ENCODE measurements at regions of chr5 and their contacts with region 1.

Region 1: DNA sequence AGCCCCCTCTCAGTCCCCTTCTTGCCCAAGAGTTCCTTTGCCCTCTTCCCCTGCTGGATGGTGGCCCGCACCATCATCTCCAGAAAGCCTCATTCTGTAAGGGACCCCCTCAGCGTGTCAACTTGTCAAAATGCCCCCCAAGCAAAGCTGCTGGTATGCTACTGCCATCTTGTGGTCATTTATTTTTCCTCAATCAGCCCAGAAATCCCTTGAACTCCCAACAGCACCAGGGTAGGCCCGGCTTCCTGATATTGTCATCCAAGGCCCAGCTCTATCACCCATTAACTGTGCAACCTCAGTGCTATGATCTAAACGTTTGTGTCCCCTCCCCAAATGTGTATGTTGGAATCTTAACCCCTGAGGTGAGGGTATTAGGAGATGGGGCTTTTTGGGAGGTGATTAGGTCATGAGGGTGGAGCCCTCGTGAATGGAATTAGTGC is 53.2 kb upstream of the FBXW11 start:
- DNase-seq: peak; percentile 46
- ATAC-seq: no peak
- H3K4me3 ChIP-seq: no peak overlapping the region
- H3K4me3 Mint-ChIP-seq: no peak overlapping the region
- H3K27ac ChIP-seq: no peak overlapping the region
- H3K27ac Mint-ChIP-seq: no peak overlapping the region
- H3K4me1 ChIP-seq: no peaks in the 10 kb centered on the region
- H3K4me1 Mint-ChIP-seq: no peaks in the 10 kb centered on the region
- H3K27me3 ChIP-seq: no peaks in the 10 kb centered on the region
- H3K27me3 Mint-ChIP-seq: no peaks in the 10 kb centered on the region
- CTCF ChIP-seq: peak; percentile 67

Region 2: DNA sequence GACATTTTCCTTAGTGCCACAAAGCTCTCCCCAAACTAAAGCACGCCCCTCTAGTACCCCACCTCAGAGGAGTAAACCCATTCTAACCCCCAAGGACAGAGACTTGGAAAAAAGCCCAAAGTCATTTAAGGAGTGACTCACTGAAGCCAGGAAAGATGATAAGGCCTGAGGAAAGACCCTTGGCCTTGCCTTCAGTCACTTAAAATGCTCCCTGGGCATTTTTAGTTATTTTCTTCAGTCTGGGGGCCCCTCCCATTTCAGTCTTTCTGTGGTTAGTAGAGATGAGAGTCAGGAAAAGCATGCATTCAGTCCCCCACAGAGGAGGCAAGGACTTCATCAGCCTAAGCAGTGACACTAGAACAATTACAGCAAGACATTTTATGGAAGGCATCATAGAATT is 764.4 kb before region 1 on chr5:
- CTCF ChIA-PET with region 1: no interaction called
- POLR2A ChIA-PET with region 1: no interaction called
- intact Hi-C with region 1: no loop called
- DNase-seq: no peak
- ATAC-seq: no peak
- H3K4me3 ChIP-seq: no peak overlapping the region
- H3K4me3 Mint-ChIP-seq: no peak overlapping the region
- H3K27ac ChIP-seq: no peak overlapping the region
- H3K27ac Mint-ChIP-seq: no peak overlapping the region
- H3K4me1 ChIP-seq: no peaks in the 10 kb centered on the region
- H3K4me1 Mint-ChIP-seq: no peaks in the 10 kb centered on the region
- H3K27me3 ChIP-seq: peaks cover 0 to 4% (median 0%) of the 10 kb centered on the region in 4 experiments
- H3K27me3 Mint-ChIP-seq: peaks cover 21% of the 10 kb centered on the region
- CTCF ChIP-seq: no peak

Region 3: GRCh38 chr5:171387345-171387969 is 672.2 kb before region 1 on chr5 and contains the start of gene NPM1:
- CTCF ChIA-PET with region 1: no interaction called
- POLR2A ChIA-PET with region 1: no interaction called
- intact Hi-C with region 1: no loop called
- DNase-seq: peak; percentile 99
- ATAC-seq: peak; percentile 87
- H3K4me3 ChIP-seq: peak within 1 kb of the TSS; percentile 67 to 82 (median 75)
- H3K4me3 Mint-ChIP-seq: peak within 1 kb of the TSS; percentile 100
- H3K27ac ChIP-seq: peak within 1 kb of the TSS; percentile 74 to 87
- H3K27ac Mint-ChIP-seq: peak within 1 kb of the TSS; percentile 99
- H3K4me1 ChIP-seq: peaks cover 39 to 41% of the 10 kb centered on the region in 2 donors
- H3K4me1 Mint-ChIP-seq: peaks cover 51% of the 10 kb centered on the region
- H3K27me3 ChIP-seq: no peaks in the 10 kb centered on the region
- H3K27me3 Mint-ChIP-seq: peaks cover under 1% of the 10 kb centered on the region
- CTCF ChIP-seq: no peak
- total RNA-seq, gene NPM1: 819 and 920 TPM in 2 replicates

Region 4: GRCh38 chr5:172071289-172071875 is 11.7 kb after region 1 on chr5:
- CTCF ChIA-PET with region 1: interaction called, 16 read pairs
- POLR2A ChIA-PET with region 1: no interaction called
- intact Hi-C with region 1: no loop called
- DNase-seq: no peak
- ATAC-seq: no peak
- H3K4me3 ChIP-seq: no peak overlapping the region
- H3K4me3 Mint-ChIP-seq: no peak overlapping the region
- H3K27ac ChIP-seq: peak overlapping the region in 1 of 2 donors; percentile 43
- H3K27ac Mint-ChIP-seq: no peak overlapping the region
- H3K4me1 ChIP-seq: peaks cover 3 to 8% of the 10 kb centered on the region in 2 donors
- H3K4me1 Mint-ChIP-seq: peaks cover 23% of the 10 kb centered on the region
- H3K27me3 ChIP-seq: no peaks in the 10 kb centered on the region
- H3K27me3 Mint-ChIP-seq: no peaks in the 10 kb centered on the region
- CTCF ChIP-seq: no peak

Region 5: GRCh38 chr5:172106511-172107356 is 47.1 kb after region 1 on chr5:
- CTCF ChIA-PET with region 1: no interaction called
- POLR2A ChIA-PET with region 1: no interaction called
- intact Hi-C with region 1: no loop called
- DNase-seq: peak; percentile 76
- ATAC-seq: no peak
- H3K4me3 ChIP-seq: no peak overlapping the region
- H3K4me3 Mint-ChIP-seq: no peak overlapping the region
- H3K27ac ChIP-seq: peak overlapping the region in 1 of 2 donors; percentile 41
- H3K27ac Mint-ChIP-seq: peak overlapping the region; percentile 70
- H3K4me1 ChIP-seq: peaks cover 31 to 40% of the 10 kb centered on the region in 2 donors
- H3K4me1 Mint-ChIP-seq: peaks cover 35% of the 10 kb centered on the region
- H3K27me3 ChIP-seq: no peaks in the 10 kb centered on the region
- H3K27me3 Mint-ChIP-seq: no peaks in the 10 kb centered on the region
- CTCF ChIP-seq: peak; percentile 92

Region 6: GRCh38 chr5:172213126-172213525 is 153.4 kb after region 1 on chr5:
- CTCF ChIA-PET with region 1: no interaction called
- POLR2A ChIA-PET with region 1: no interaction called
- intact Hi-C with region 1: no loop called
- DNase-seq: no peak
- ATAC-seq: no peak
- H3K4me3 ChIP-seq: no peak overlapping the region
- H3K4me3 Mint-ChIP-seq: no peak overlapping the region
- H3K27ac ChIP-seq: no peak overlapping the region
- H3K27ac Mint-ChIP-seq: no peak overlapping the region
- H3K4me1 ChIP-seq: no peaks in the 10 kb centered on the region
- H3K4me1 Mint-ChIP-seq: no peaks in the 10 kb centered on the region
- H3K27me3 ChIP-seq: no peaks in the 10 kb centered on the region
- H3K27me3 Mint-ChIP-seq: no peaks in the 10 kb centered on the region
- CTCF ChIP-seq: no peak